ENCODE measurements at regions of chr18 and their contacts with region 1.

Region 1: DNA sequence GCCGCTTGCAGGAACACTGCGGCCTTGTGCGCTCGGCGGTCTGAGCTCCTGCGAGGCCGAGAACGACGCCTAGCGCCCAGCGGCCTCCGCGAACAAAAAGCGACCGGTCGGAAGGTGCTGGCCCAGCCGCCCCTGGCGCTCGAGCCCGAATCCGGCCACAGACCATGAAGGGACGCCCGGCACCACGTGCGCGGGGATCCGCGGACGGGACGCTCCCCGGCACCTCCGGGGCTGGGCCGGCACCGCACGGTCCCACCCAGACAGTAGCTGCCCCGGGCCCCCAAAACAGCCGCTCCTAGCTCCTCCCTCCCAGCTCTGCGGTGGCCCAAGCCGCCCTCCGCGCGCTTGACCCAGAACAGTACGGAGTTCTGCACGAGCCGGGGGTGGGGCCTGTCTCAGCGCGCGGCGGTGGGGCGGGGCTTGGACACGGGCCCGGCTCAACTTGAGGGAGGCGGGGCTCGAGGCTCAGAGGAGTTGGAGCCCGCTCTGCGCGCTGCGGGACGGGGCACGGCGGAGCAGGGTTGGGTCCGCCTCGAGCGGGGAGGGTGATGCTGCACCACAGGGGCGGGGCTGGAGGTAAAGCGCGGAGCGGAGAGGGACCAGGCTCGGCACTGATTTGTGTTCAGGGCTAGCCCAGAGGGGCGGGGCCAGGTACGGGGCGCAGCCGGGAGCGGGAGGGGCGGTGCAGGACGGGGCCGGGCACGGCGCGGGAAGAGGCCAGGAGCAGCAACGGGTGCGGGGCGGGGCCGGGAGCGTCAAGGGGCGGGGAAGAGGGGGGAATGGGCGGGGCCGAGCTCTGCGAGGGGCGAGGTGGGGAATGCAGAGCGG is 538 bp upstream of the IMPA2 start:
- DNase-seq: peak; percentile 97 to 99 (median 99)
- ATAC-seq: peak; percentile 93 to 96 (median 95)
- H3K4me3 ChIP-seq: peak overlapping the region; percentile 70 to 97 (median 89)
- H3K27ac ChIP-seq: peak overlapping the region; percentile 83 to 99 (median 95)
- H3K4me1 ChIP-seq: peaks cover 0 to 47% (median 16%) of the 10 kb centered on the region in 12 donors
- H3K27me3 ChIP-seq: no peaks in the 10 kb centered on the region
- CTCF ChIP-seq: peak in 4 of 12 donors; percentile 32 to 43 (median 36)
- POLR2A ChIP-seq: peak; percentile 68 to 96

Region 2: GRCh38 chr18:11851146-11851805 is 129.5 kb before region 1 on chr18 and contains the start of gene CHMP1B:
- intact Hi-C with region 1: loop called in 3 of 10 experiments (anchors 1 to 2 kb)
- DNase-seq: peak; percentile 98 to 99 (median 99)
- ATAC-seq: peak; percentile 97 to 99 (median 99)
- H3K4me3 ChIP-seq: peak within 1 kb of the TSS; percentile 63 to 99 (median 86)
- H3K27ac ChIP-seq: peak within 1 kb of the TSS; percentile 86 to 98 (median 94)
- H3K4me1 ChIP-seq: peaks cover 5 to 44% (median 21%) of the 10 kb centered on the region in 12 donors
- H3K27me3 ChIP-seq: no peaks in the 10 kb centered on the region
- CTCF ChIP-seq: no peak
- POLR2A ChIP-seq: peak; percentile 81 to 98
- total RNA-seq, gene CHMP1B: 29.6 to 41.2 (median 37.3) TPM

Region 3: DNA sequence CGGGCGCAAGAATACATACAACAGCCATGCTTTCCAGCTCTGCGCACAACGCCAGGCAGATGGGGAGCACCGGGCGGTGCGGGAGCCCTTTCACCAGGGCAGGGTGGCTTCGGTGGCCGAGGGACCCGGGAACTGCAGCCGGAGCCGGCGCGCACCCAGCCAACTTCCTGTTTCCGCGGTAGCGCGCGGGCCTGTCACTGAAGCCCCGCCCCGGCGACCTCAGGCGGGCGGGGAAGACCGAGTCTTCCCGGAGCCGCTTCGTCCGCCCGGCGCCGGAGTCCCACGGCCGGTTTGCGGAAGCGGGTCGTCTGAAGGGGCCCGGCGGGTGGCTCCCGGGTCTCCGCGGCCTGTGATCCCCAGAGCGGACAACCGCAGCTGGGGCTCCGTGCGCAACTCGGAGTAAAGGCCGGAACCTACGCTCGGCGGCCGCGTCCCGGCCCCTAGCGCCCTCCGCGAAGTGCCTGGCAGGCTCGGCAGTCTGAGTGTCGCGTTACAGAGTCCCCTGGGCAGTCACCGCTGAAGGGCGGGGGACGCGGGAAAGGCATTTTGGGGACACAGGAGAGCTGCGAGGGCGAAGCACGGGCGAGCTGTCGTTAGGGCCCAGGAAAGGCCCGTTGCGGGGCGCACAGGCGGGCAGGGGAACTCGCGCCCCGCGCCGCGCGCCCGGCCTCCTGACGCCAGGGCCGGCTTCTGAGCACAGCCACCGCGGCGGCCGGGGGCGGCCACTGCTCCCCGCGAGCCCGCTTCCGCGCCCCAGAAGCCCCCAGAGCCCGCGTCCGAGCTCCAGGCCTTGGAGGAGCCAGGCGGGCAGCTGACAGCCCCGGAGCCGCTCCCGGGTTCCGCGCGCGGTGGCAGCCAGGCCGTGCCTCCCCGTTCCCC is 72.3 kb before region 1 on chr18 and contains the start of gene MPPE1:
- intact Hi-C with region 1: loop called in 3 of 10 experiments (anchors 2 kb)
- DNase-seq: peak; percentile 92 to 96 (median 93)
- ATAC-seq: peak; percentile 79 to 97 (median 95)
- H3K4me3 ChIP-seq: peak within 1 kb of the TSS; percentile 62 to 95 (median 78)
- H3K27ac ChIP-seq: peak within 1 kb of the TSS; percentile 95 to 100 (median 98)
- H3K4me1 ChIP-seq: peaks cover 0 to 34% (median 17%) of the 10 kb centered on the region in 12 donors
- H3K27me3 ChIP-seq: no peaks in the 10 kb centered on the region
- CTCF ChIP-seq: peak in 3 of 12 donors; percentile 5 to 7 (median 5)
- POLR2A ChIP-seq: peak; percentile 65 to 83
- total RNA-seq, gene MPPE1: 17.8 to 45.5 (median 29.7) TPM

Region 4: DNA sequence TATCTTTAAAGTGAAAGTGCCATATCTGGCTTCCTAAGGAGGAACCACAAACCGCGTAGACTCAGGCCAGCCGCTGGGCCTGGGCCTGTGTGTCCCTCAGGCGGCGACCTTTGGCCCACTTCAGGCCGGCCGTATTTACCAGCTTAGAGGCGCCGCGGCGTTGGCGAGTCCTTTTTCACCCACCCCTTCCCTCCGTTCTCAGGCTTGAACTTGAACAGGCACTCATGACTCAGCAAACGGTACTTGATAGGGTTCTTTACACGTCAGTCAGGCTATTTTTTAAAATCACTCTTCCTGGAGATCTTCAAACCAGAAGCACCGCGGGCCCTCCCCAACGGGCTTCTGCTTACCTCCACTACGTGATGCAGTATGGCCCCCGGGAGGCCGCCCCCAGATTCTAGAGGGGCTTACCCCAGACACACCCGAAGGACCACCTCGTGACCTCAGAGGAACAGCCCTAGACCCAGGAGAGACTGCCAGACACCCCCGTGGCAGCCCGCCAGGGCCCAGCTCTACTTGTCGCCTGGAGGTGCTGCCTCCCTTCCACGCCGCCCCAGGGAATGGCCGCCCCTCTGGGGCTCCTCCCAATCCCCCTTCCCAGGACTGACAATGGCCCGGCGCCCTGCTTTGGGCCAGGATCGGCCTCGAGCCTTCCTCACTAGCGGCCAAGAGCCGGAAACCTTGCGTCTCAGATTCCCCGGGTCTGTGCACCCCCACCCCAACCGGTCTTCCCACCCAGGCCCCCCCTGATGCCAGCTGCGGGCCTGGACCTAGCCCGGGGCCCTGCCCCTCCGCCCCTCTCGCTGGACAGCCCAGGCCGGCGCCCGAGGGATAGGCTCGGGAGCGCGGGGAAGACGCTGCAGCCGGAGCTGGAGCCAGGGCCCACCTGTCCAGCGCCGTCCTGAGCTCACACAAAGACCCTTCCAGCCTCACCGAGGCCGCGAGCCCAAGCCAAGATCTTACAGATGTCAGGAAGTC is 33.3 kb before region 1 on chr18:
- intact Hi-C with region 1: loop called in 9 of 10 experiments (anchors 1 to 5 kb)
- DNase-seq: peak; percentile 93 to 97 (median 95)
- ATAC-seq: peak; percentile 98 to 99 (median 98)
- H3K4me3 ChIP-seq: peak overlapping the region; percentile 4 to 86 (median 65)
- H3K27ac ChIP-seq: peak overlapping the region; percentile 88 to 100 (median 96)
- H3K4me1 ChIP-seq: peaks cover 0 to 22% (median 13%) of the 10 kb centered on the region in 12 donors
- H3K27me3 ChIP-seq: no peaks in the 10 kb centered on the region
- CTCF ChIP-seq: peak in 2 of 12 donors; percentile 5 to 15
- POLR2A ChIP-seq: peak in 1 of 2 donors; percentile 86

Region 5: DNA sequence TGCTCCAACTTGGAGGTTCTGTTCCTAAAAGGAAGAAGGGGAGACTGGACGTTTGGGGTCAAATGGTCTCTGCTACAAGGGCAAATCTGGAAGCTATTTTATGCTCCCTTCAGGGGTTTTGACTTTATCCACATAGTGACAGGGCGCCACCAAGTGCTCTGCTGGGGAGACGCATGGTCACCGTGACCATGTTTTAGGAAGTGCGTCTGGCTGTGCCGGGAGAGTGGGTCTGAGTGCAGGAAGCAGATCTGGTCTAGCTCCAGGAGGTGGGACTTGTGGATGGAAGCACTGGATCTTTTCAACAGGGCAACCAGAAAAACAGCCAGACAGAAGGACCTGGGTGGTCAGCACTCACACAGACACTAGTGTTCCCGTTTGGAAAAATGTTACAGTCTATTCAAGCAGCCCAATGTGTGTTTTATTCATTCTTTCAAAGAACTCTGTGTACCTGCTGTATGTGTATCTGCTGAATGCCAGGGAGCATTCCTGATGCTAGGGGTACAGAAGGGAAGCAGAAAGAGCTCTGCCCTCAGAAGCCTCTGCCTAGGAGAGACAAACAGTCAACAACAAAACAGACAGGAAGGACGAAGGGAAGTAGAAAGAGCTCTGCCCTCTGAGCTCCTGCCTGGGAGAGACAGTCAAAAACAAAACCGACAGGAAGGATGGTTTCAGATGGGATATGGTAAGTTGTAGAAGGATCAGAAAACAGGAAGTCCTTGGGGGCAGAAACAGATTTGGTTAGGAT is 14.8 kb after region 1 on chr18:
- intact Hi-C with region 1: loop called in 1 of 10 experiments (anchors 1 kb)
- DNase-seq: peak; percentile 79 to 87 (median 84)
- ATAC-seq: peak; percentile 80 to 92 (median 86)
- H3K4me3 ChIP-seq: no peak overlapping the region
- H3K27ac ChIP-seq: peak overlapping the region in 10 of 12 donors; percentile 28 to 72 (median 58)
- H3K4me1 ChIP-seq: peaks cover 0 to 42% (median 24%) of the 10 kb centered on the region in 12 donors
- H3K27me3 ChIP-seq: no peaks in the 10 kb centered on the region
- CTCF ChIP-seq: peak; percentile 59 to 91 (median 80)
- POLR2A ChIP-seq: peak in 1 of 2 donors; percentile 21

Region 6: GRCh38 chr18:12031846-12032245 is 51.1 kb after region 1 on chr18:
- intact Hi-C with region 1: loop called in 2 of 10 experiments (anchors 2 to 5 kb)
- DNase-seq: peak in 4 of 5 donors; percentile 39 to 76 (median 56)
- ATAC-seq: peak in 1 of 4 donors; percentile 41
- H3K4me3 ChIP-seq: no peak overlapping the region
- H3K27ac ChIP-seq: peak overlapping the region in 9 of 12 donors; percentile 0 to 71 (median 51)
- H3K4me1 ChIP-seq: peaks cover 0 to 16% (median 2%) of the 10 kb centered on the region in 12 donors
- H3K27me3 ChIP-seq: no peaks in the 10 kb centered on the region
- CTCF ChIP-seq: no peak
- POLR2A ChIP-seq: no peak

Region 7: DNA sequence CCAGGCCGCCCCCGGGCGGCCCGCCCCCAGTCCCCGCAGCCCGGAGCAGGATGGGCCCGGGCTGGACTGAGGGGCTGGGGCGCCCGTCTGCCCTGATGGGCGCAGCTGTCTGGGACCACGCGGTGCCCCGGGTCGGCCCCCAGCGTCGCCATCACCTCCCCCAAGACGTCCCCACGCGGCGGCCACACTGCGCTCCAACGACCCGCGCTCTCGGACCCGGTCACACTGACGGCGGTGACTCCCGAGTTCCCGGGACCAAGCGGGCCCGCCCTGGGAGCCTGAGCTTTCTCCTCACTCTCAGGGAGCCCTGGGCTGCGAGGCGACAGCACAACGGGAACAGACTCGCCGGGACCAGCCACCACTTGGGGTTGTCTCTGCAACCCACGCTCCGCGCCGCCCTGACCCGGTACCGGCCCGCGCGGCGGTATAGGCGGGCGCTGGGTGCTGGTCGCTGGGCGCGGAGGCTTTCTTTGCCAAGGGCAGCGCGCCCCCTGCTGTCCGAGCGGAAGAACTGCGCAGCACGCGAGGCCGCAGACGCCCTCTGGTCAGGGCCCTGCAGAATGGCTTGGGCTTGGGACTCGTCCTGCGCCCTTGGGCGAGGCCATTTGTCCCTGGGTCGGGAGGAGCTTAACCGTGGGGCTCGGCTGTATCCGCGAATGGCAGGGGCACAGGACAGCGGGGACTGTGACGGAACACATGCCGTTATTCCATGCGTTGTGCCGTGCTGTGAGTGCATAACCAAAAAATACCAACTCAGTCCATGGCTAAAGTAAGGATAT is 58.1 kb after region 1 on chr18:
- intact Hi-C with region 1: loop called in 2 of 10 experiments (anchors 2 to 5 kb)
- DNase-seq: peak; percentile 82 to 93 (median 89)
- ATAC-seq: peak; percentile 93 to 97 (median 96)
- H3K4me3 ChIP-seq: peak overlapping the region; percentile 24 to 67 (median 59)
- H3K27ac ChIP-seq: peak overlapping the region in 7 of 12 donors; percentile 19 to 69 (median 41)
- H3K4me1 ChIP-seq: peaks cover 0 to 15% (median 6%) of the 10 kb centered on the region in 12 donors
- H3K27me3 ChIP-seq: peaks cover 0 to 3% (median 0%) of the 10 kb centered on the region in 9 donors
- CTCF ChIP-seq: peak; percentile 98 to 99 (median 99)
- POLR2A ChIP-seq: peak in 1 of 2 donors; percentile 29

Region 8: DNA sequence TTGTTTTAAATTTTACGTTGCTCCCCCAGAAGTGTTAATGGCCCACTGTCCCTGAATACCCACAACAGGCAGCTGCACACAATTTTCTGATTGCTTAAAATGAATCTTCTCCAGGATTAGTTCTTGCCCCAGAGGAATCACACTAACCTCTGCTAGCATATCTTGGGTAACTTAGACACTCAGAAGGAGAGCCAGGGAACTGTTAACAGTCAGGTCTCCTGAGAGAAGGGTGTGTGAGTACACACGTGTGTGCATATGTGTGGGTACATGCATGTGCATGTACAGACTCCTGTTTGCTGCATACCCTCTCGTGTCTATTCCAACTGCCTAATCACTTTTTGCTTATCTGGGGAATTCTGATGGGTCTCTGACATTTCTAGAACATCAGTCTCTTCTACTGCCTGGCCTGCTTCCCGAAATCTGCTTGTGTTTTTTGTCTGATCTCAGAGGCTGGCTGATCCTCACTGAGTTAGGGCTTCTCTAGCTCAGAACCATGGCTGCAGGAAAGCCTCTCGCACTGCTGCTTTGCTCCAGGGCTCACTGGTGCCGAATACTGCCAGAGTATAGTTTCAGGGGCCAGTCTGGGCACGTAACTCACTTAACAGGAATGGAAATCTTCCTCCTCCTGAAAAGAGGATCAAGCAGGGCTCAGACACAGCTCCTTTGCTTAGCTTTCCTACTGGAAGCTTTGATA is 489.8 kb after region 1 on chr18:
- intact Hi-C with region 1: no loop called
- DNase-seq: no peak
- ATAC-seq: peak in 1 of 4 donors; percentile 76
- H3K4me3 ChIP-seq: no peak overlapping the region
- H3K27ac ChIP-seq: no peak overlapping the region
- H3K4me1 ChIP-seq: peaks cover 0 to 13% (median 0%) of the 10 kb centered on the region in 12 donors
- H3K27me3 ChIP-seq: no peaks in the 10 kb centered on the region
- CTCF ChIP-seq: no peak
- POLR2A ChIP-seq: no peak